ENCODE measurements at regions of chr4 and their contacts with region 1.

Region 1: GRCh38 chr4:102578819-102579218 is 77.7 kb downstream of the NFKB1 start:
- DNase-seq: no peak
- ATAC-seq: no peak
- H3K4me3 Mint-ChIP-seq: no peak overlapping the region
- H3K27ac Mint-ChIP-seq: peak overlapping the region; percentile 36
- H3K4me1 Mint-ChIP-seq: peaks cover 72% of the 10 kb centered on the region
- H3K27me3 Mint-ChIP-seq: no peaks in the 10 kb centered on the region
- CTCF ChIP-seq: no peak

Region 2: DNA sequence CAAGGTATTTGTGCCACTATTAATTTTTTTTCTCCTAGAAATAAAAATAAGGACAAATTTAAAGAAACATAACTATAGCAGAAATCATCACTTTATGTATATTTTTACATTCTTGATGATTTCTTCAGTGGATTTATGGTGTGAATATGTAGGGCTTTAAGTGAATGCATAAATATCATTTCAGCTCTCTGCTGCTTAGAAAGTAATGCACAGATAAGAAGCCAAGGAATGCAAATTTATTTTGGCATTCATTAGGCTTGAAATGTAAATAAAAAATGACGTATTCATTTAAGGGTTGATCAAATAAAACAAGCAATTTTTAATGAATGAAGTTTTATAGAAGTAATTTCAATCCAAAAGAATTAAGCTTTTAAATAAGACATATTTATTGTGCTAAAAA is 11.4 kb before region 1 on chr4:
- CTCF ChIA-PET with region 1: interaction called, 10 read pairs
- POLR2A ChIA-PET with region 1: interaction called, 6 read pairs
- intact Hi-C with region 1: no loop called
- DNase-seq: no peak
- ATAC-seq: no peak
- H3K4me3 Mint-ChIP-seq: no peak overlapping the region
- H3K27ac Mint-ChIP-seq: peak overlapping the region; percentile 67
- H3K4me1 Mint-ChIP-seq: peaks cover 70% of the 10 kb centered on the region
- H3K27me3 Mint-ChIP-seq: no peaks in the 10 kb centered on the region
- CTCF ChIP-seq: no peak